ENCODE measurements at regions of chr17 and their contacts with region 1.

Region 1: DNA sequence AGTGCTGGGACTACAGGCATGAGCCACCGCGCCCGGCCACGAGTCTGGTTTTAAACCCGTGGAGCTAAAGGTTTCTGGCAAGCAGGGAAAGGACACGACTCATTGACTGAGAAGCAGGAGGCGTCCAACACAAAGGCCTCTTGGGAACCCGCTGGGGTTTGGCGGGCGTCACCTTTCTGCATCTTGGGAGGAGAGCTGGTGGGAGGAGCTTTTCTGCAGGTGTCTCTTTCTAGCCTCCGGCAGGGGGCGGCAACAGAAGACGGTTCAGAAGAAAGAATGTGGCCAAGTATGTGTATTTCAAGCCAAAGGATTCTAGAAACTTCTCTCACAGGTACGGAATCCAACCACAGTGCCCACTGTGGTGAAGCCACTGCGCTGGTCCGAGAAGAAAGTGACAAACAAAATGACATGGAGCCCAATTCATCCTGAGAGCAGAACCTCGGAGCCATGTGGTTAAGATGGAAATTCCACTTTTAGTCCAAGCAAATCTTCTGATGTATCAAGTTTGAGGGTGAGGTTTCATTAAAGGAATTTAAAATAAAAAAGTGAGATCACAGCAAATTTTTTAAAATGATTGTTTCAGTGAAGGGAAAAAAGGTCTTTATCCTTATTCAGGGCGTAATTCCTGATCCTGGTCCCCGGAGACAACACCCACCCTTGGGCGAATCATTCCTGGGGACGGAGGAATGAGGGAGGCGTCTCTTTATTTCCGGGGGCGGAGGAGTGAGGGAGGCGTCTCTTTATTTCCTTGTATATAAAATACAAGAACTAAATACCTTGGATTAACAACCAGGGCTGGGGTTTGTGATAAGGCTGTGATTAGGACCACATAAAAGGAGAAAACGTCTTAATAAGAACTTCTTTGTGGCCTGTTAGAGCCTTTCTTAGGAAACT is 97.6 kb downstream of the MRM3 start:
- DNase-seq: peak; percentile 84
- ATAC-seq: peak; percentile 54

Region 2: DNA sequence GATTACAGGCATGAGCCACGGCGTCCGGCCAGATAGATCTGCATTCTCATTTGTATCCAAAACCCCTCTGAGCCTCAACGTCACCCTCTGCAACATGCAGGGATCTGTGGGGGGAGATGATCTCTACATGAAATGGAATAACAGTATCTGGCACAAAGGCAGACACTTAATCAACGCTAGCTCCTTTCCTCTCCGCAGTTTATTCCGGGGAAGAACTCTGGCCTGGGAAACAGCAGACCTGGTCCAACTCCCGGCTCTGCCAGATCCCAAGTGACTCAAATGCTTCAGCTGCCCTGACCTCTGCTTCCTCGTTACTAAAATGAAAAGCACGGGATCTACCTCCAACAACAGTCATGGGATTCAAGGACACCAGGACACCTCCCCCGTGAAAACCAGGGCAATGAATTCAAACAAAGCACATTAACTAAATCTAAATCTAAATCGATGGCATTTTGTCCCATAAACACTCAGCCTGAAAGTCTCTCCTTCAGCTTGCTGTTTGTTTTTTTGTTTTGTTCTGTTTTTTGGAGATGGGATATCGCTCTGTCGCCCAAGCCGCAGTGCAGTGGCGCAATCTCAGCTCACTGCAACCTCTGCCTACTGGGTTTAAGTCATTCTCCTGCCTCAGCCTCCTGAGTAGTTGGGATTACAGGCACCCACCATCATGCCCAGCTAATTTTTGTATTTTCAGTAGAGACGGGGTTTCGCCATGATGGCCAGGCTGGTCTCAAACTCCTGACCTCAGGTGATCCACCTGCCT is 21.6 kb after region 1 on chr17:
- intact Hi-C with region 1: loop called (anchors 2 kb)
- DNase-seq: peak; percentile 68
- ATAC-seq: peak; percentile 90

Region 3: DNA sequence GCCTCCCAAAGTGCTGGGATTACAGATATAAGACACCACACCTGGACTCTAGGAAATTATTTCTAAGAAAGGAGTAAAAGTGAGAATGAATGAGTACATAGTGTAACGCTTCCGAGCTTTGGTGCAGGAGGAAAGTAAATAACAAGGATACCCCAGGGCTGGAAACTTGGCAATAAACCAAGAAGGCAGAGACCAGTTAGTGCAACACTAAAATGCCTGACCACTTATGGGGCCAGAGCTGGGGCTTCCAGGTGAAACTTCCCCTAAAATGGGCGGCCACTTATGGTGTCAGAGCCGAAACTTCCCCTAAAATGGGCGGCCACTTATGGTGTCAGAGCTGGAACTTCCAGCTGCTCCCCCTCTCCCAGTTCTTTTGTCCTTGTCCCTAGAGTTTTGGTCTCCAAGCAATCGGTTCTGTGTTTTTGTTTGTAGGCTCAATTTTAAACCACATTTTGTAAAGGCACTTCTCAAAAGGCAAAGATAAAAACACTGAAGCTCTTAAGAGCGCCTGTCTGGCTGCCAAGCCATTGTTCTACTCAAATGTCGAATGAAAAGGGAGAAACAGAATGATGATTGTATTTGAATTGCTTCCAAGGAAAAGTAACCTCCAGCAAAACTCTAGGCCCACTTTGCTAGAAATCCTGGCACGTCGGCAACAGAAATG is 35.9 kb after region 1 on chr17:
- intact Hi-C with region 1: loop called (anchors 5 kb)
- DNase-seq: no peak
- ATAC-seq: peak; percentile 55

Measured in Right ventricle myocardium inferior (tissue), 1 donor.